Heart left ventricle (tissue), 16 donors: ENCODE measurements at regions of chr17 and their contacts with region 1.

Region 1: GRCh38 chr17:70622368-70623260 is 453.3 kb downstream of the KCNJ2 start:
- DNase-seq: peak in 4 of 5 donors; percentile 39 to 58 (median 50)
- ATAC-seq: peak; percentile 59 to 83 (median 76)
- H3K4me3 ChIP-seq: peak overlapping the region in 2 of 12 donors; percentile 15 to 30
- H3K27ac ChIP-seq: no peak overlapping the region
- H3K4me1 ChIP-seq: peaks cover 0 to 22% (median 0%) of the 10 kb centered on the region in 12 donors
- H3K27me3 ChIP-seq: no peaks in the 10 kb centered on the region
- CTCF ChIP-seq: peak; percentile 33 to 68 (median 55)
- POLR2A ChIP-seq: no peak

Region 2: GRCh38 chr17:69523244-69523861 is 1099.3 kb before region 1 on chr17:
- intact Hi-C with region 1: loop called in 6 of 10 experiments (anchors 2 to 10 kb)
- DNase-seq: peak in 1 of 5 donors; percentile 20
- ATAC-seq: peak in 2 of 4 donors; percentile 72 to 73
- H3K4me3 ChIP-seq: no peak overlapping the region
- H3K27ac ChIP-seq: no peak overlapping the region
- H3K4me1 ChIP-seq: no peaks in the 10 kb centered on the region
- H3K27me3 ChIP-seq: no peaks in the 10 kb centered on the region
- CTCF ChIP-seq: peak; percentile 55 to 74 (median 66)
- POLR2A ChIP-seq: no peak

Region 3: DNA sequence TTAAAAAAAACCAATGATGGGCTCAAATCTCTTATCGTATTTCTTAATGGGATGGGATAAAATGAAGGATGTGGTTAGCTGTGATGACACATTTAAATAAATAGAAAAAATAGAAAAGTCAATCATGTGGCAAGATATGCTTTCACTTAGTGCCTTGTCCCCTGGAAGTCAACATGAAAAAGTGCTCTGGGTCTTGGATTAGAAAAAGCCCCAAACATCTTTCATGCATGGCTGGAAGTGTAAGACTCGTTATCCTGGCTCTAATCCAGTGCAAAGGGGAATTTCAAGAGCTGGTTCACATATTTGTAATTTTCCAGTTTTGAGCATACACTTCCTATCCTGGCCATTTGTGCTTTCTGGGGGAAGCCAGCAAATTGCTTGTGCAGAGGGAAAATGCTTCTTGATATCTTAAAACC is 1047.3 kb before region 1 on chr17:
- intact Hi-C with region 1: loop called in 1 of 10 experiments (anchors 5 kb)
- DNase-seq: no peak
- ATAC-seq: peak in 2 of 4 donors; percentile 55 to 63
- H3K4me3 ChIP-seq: no peak overlapping the region
- H3K27ac ChIP-seq: peak overlapping the region in 10 of 12 donors; percentile 3 to 58 (median 27)
- H3K4me1 ChIP-seq: peaks cover 3 to 31% (median 19%) of the 10 kb centered on the region in 12 donors
- H3K27me3 ChIP-seq: no peaks in the 10 kb centered on the region
- CTCF ChIP-seq: no peak
- POLR2A ChIP-seq: no peak

Region 4: DNA sequence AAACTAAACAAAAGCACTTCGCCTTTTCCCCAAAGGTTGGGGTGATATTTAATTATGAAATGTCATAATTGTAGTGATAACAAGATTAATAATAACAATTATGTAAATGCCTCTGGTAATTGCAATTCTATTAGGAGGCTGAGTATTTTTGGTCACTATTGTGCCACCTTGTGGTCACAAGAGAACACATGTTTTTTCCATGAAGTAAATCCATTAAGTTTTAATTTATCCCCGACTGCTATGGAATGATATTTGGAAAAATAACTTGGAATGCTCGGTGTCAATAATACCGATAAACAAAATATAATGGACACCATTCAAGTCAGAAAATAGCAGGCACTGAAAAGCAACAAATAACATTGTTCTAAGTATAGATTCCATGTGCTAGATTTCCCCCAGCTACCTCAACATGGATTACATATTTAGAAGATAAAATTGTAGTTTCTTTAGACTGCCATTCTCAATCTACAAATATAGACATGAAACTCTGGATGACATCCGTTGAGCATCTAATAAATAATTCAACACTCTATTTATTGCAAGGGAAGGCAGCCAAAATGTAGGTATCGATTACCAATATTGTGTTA is 478.3 kb before region 1 on chr17:
- intact Hi-C with region 1: loop called in 1 of 10 experiments (anchors 5 kb)
- DNase-seq: no peak
- ATAC-seq: no peak
- H3K4me3 ChIP-seq: no peak overlapping the region
- H3K27ac ChIP-seq: no peak overlapping the region
- H3K4me1 ChIP-seq: peaks cover 0 to 5% (median 0%) of the 10 kb centered on the region in 12 donors
- H3K27me3 ChIP-seq: no peaks in the 10 kb centered on the region
- CTCF ChIP-seq: peak; percentile 61 to 85 (median 74)
- POLR2A ChIP-seq: no peak

Region 5: GRCh38 chr17:70313057-70313852 is 309.4 kb before region 1 on chr17:
- intact Hi-C with region 1: loop called in 1 of 10 experiments (anchors 10 kb)
- DNase-seq: no peak
- ATAC-seq: no peak
- H3K4me3 ChIP-seq: no peak overlapping the region
- H3K27ac ChIP-seq: peak overlapping the region in 1 of 12 donors; percentile 81
- H3K4me1 ChIP-seq: peaks cover 0 to 27% (median 5%) of the 10 kb centered on the region in 12 donors
- H3K27me3 ChIP-seq: no peaks in the 10 kb centered on the region
- CTCF ChIP-seq: no peak
- POLR2A ChIP-seq: no peak

Region 6: GRCh38 chr17:70510288-70510687 is 112.3 kb before region 1 on chr17:
- intact Hi-C with region 1: no loop called
- DNase-seq: no peak
- ATAC-seq: no peak
- H3K4me3 ChIP-seq: no peak overlapping the region
- H3K27ac ChIP-seq: no peak overlapping the region
- H3K4me1 ChIP-seq: no peaks in the 10 kb centered on the region
- H3K27me3 ChIP-seq: no peaks in the 10 kb centered on the region
- CTCF ChIP-seq: no peak
- POLR2A ChIP-seq: no peak

Region 7: GRCh38 chr17:70563281-70563820 is 59.3 kb before region 1 on chr17:
- intact Hi-C with region 1: loop called in 2 of 10 experiments (anchors 10 kb)
- DNase-seq: peak in 4 of 5 donors; percentile 23 to 69 (median 46)
- ATAC-seq: peak; percentile 55 to 89 (median 84)
- H3K4me3 ChIP-seq: no peak overlapping the region
- H3K27ac ChIP-seq: peak overlapping the region in 1 of 12 donors; percentile 29
- H3K4me1 ChIP-seq: peaks cover 0 to 10% (median 0%) of the 10 kb centered on the region in 12 donors
- H3K27me3 ChIP-seq: no peaks in the 10 kb centered on the region
- CTCF ChIP-seq: no peak
- POLR2A ChIP-seq: no peak

Region 8: GRCh38 chr17:70577456-70577855 is 45.2 kb before region 1 on chr17:
- intact Hi-C with region 1: no loop called
- DNase-seq: no peak
- ATAC-seq: no peak
- H3K4me3 ChIP-seq: no peak overlapping the region
- H3K27ac ChIP-seq: no peak overlapping the region
- H3K4me1 ChIP-seq: no peaks in the 10 kb centered on the region
- H3K27me3 ChIP-seq: no peaks in the 10 kb centered on the region
- CTCF ChIP-seq: no peak
- POLR2A ChIP-seq: no peak

Region 9: GRCh38 chr17:70604854-70605253 is 17.8 kb before region 1 on chr17:
- intact Hi-C with region 1: no loop called
- DNase-seq: no peak
- ATAC-seq: no peak
- H3K4me3 ChIP-seq: no peak overlapping the region
- H3K27ac ChIP-seq: no peak overlapping the region
- H3K4me1 ChIP-seq: no peaks in the 10 kb centered on the region
- H3K27me3 ChIP-seq: no peaks in the 10 kb centered on the region
- CTCF ChIP-seq: no peak
- POLR2A ChIP-seq: no peak